GM12878 (cell line): ENCODE measurements at regions of chr19 and their contacts with region 1.

Region 1: GRCh38 chr19:38849860-38850435 is at the start of gene HNRNPL:
- DNase-seq: peak; percentile 100
- ATAC-seq: peak; percentile 76
- H3K4me3 ChIP-seq: peak within 1 kb of the TSS; percentile 79
- H3K27ac ChIP-seq: peak within 1 kb of the TSS; percentile 96
- H3K4me1 ChIP-seq: peaks cover 10% of the 10 kb centered on the region
- H3K27me3 ChIP-seq: no peaks in the 10 kb centered on the region
- CTCF ChIP-seq: peak; percentile 28 to 42 (median 33); a peak in 4 of 6 replicates
- EP300 ChIP-seq: 0 out of 4 replicates have a peak, but pooled peaks of 1 of the 2 experiments have one; percentile 10
- POLR2A ChIP-seq: peak; percentile 90
- RAD21 ChIP-seq: no peak
- polyA plus RNA-seq, gene HNRNPL: 32.5 to 92.5 TPM

Region 2: GRCh38 chr19:38711726-38712153 is 138.2 kb before region 1 on chr19:
- CTCF ChIA-PET with region 1: no interaction called
- POLR2A ChIA-PET with region 1: no interaction called
- RAD21 ChIA-PET with region 1: no interaction called
- SMC1A ChIA-PET with region 1: no interaction called
- in situ Hi-C with region 1: no loop called
- intact Hi-C with region 1: no loop called
- DNase-seq: no peak
- ATAC-seq: no peak
- H3K4me3 ChIP-seq: no peak overlapping the region
- H3K27ac ChIP-seq: no peak overlapping the region
- H3K4me1 ChIP-seq: no peaks in the 10 kb centered on the region
- H3K27me3 ChIP-seq: no peaks in the 10 kb centered on the region
- CTCF ChIP-seq: no peak
- EP300 ChIP-seq: no peak
- POLR2A ChIP-seq: no peak
- RAD21 ChIP-seq: no peak

Region 3: GRCh38 chr19:38812841-38813320 is 37.1 kb before region 1 on chr19 and contains the start of gene LGALS4:
- CTCF ChIA-PET with region 1: no interaction called
- POLR2A ChIA-PET with region 1: no interaction called
- RAD21 ChIA-PET with region 1: no interaction called
- SMC1A ChIA-PET with region 1: no interaction called
- in situ Hi-C with region 1: no loop called
- intact Hi-C with region 1: no loop called
- DNase-seq: no peak
- ATAC-seq: no peak
- H3K4me3 ChIP-seq: no peak within 1 kb of the TSS
- H3K27ac ChIP-seq: no peak within 1 kb of the TSS
- H3K4me1 ChIP-seq: no peaks in the 10 kb centered on the region
- H3K27me3 ChIP-seq: no peaks in the 10 kb centered on the region
- CTCF ChIP-seq: no peak
- EP300 ChIP-seq: no peak
- POLR2A ChIP-seq: no peak
- RAD21 ChIP-seq: no peak
- polyA plus RNA-seq, gene LGALS4: 0.15 TPM in 1 of 2 experiments, not detected in the other

Region 4: GRCh38 chr19:38831142-38831605 is 18.8 kb before region 1 on chr19:
- CTCF ChIA-PET with region 1: interaction called, 12 read pairs
- POLR2A ChIA-PET with region 1: interaction called, 43 read pairs
- RAD21 ChIA-PET with region 1: interaction called, 17 read pairs
- SMC1A ChIA-PET with region 1: interaction called, 6 read pairs
- in situ Hi-C with region 1: no loop called
- intact Hi-C with region 1: no loop called
- DNase-seq: no peak
- ATAC-seq: peak; percentile 91
- H3K4me3 ChIP-seq: peak overlapping the region; percentile 75
- H3K27ac ChIP-seq: peak overlapping the region; percentile 95
- H3K4me1 ChIP-seq: no peaks in the 10 kb centered on the region; the same call in 1 of the 2 replicates
- H3K27me3 ChIP-seq: no peaks in the 10 kb centered on the region
- CTCF ChIP-seq: no peak
- EP300 ChIP-seq: no peak
- POLR2A ChIP-seq: no peak
- RAD21 ChIP-seq: no peak

Region 5: DNA sequence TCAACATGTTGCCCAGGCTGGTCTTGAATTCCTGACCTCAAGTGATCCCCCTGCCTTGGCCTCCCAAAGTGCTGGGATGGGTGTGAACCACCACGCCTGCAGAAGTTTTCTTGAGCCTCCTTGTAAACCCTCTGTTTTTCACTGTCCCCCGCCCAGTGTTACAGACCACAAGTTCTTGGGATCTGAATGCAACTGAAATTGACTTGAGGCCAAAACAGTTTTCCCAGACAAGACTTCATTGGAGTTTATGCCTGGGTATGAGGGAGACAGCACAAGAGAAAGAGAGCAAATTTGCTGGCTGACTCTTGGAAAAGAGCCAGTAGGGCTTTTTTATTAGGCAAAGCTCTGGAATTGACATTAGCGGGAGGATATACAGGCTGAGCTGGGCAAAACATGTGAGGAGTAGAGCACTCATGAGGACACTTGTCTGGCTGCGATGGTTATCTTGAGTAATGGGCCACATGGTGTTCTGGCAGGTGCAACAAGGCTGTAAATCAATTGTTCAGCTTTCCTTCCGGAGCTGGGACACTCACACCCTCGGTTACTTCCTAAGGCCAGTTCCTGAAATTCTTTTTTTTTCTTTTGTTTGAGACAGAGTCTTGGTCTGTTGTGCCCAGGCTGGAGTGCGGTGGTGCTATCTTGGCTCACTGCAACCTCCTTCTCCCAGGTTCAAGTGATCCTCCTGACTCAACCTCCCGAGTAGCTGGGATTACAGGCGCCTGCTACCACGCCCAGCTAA is 12.5 kb after region 1 on chr19:
- CTCF ChIA-PET with region 1: interaction called, 21 read pairs
- POLR2A ChIA-PET with region 1: interaction called, 144 read pairs
- RAD21 ChIA-PET with region 1: interaction called, 47 read pairs
- SMC1A ChIA-PET with region 1: interaction called, 44 read pairs
- in situ Hi-C with region 1: no loop called
- intact Hi-C with region 1: loop called (anchors 1 kb)
- DNase-seq: no peak
- ATAC-seq: no peak
- H3K4me3 ChIP-seq: no peak overlapping the region
- H3K27ac ChIP-seq: no peak overlapping the region
- H3K4me1 ChIP-seq: peaks cover 37% of the 10 kb centered on the region
- H3K27me3 ChIP-seq: no peaks in the 10 kb centered on the region
- CTCF ChIP-seq: no peak
- EP300 ChIP-seq: no peak
- POLR2A ChIP-seq: no peak
- RAD21 ChIP-seq: no peak

Region 6: GRCh38 chr19:38899447-38900219 is 49.7 kb after region 1 on chr19 and contains the starts of genes NFKBIB and SIRT2:
- CTCF ChIA-PET with region 1: interaction called, 3 read pairs
- POLR2A ChIA-PET with region 1: interaction called, 6 read pairs
- RAD21 ChIA-PET with region 1: no interaction called
- SMC1A ChIA-PET with region 1: interaction called, 3 read pairs
- in situ Hi-C with region 1: no loop called
- intact Hi-C with region 1: loop called (anchors 1 kb)
- DNase-seq: peak; percentile 99
- ATAC-seq: peak; percentile 96
- H3K4me3 ChIP-seq: peak within 1 kb of the TSS; percentile 90
- H3K27ac ChIP-seq: peak within 1 kb of the TSS; percentile 75
- H3K4me1 ChIP-seq: peaks cover 5% of the 10 kb centered on the region
- H3K27me3 ChIP-seq: no peaks in the 10 kb centered on the region
- CTCF ChIP-seq: no peak
- EP300 ChIP-seq: no peak
- POLR2A ChIP-seq: peak; percentile 79
- RAD21 ChIP-seq: no peak
- polyA plus RNA-seq, gene NFKBIB: 1.2 to 4.3 TPM
- polyA plus RNA-seq, gene SIRT2: 1.4 to 5.1 TPM